GM10248 (cell line): ENCODE measurements at regions of chr5 and their contacts with region 1.

Region 1: DNA sequence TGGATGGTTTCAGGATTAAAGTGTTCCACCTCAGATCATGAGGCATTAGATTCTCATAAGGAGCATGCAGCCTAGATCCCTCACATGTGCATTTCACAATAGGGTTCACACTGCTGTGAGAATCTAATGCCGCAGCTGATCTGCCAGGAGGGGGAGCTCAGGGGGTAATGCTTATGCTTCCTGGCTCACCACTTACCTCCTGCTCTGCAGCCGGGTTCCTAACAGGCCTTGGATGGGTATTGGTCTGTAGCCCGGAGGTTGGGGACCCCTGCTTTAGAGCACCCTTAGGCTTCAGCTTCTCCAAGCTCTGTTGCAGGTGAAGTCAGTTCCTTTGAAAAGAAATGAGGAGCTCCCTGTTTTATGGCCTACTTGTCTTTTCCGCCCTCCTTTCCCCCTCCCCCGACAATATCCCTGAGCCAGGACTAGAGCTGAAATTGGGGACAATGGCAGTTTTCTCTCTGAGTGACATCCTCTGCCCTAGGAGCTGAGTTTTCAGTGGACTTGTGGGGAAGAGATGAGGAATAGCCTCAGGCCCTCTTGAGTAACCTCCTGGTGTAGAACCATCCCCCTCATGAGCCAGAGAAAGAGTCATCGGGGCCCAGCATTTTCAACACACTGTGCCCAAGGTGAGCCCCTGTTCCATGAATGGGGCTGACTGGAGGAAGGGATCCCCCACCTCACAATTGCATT is 16.2 kb upstream of the MAT2B start:
- DNase-seq: no peak
- CTCF ChIP-seq: peak; percentile 12

Region 2: GRCh38 chr5:163453705-163454104 is 35.5 kb before region 1 on chr5:
- CTCF ChIA-PET with region 1: no interaction called
- POLR2A ChIA-PET with region 1: no interaction called
- DNase-seq: no peak
- CTCF ChIP-seq: no peak

Region 3: GRCh38 chr5:163473635-163474243 is 15.5 kb before region 1 on chr5:
- CTCF ChIA-PET with region 1: interaction called, 31 read pairs
- POLR2A ChIA-PET with region 1: no interaction called
- DNase-seq: peak; percentile 21
- CTCF ChIP-seq: peak; percentile 28

Region 4: GRCh38 chr5:163585206-163585605 is 96.0 kb after region 1 on chr5:
- CTCF ChIA-PET with region 1: no interaction called
- POLR2A ChIA-PET with region 1: no interaction called
- DNase-seq: no peak
- CTCF ChIP-seq: no peak